OCI-LY7 (cell line): ENCODE measurements at regions of chr15 and their contacts with region 1.

Region 1: DNA sequence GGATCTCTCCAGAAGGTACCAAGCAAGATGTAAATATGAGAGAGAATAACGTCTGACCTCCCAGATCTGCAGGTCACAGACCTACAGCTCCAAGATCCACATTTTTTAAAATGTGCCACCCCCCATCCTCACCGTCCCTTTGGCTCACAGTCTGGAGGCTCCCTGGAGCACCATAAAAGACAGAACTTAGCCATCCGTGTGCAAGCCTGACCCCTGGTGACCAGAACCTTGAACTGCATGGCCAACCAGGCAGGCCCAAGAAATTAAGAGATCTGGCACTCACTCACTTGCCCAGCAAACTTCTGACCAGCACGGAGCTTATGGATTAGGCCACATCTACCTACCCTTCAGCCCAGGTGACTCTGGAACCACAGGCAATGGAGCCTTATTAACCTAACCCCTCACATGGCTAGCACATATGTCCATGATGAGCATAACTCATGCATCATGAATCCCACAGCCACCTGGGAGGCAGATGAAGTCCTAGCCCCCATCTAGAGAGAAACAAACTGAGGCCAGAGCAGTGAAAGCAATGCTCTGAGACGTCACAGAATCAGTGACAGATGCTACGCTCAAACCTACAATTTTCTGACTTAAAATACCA is 275.3 kb downstream of the UACA start:
- DNase-seq: peak; percentile 66
- H3K4me3 ChIP-seq: no peak overlapping the region
- H3K27ac ChIP-seq: no peak overlapping the region
- H3K4me1 ChIP-seq: peaks cover 33% of the 10 kb centered on the region
- CTCF ChIP-seq: peak; percentile 95

Region 2: DNA sequence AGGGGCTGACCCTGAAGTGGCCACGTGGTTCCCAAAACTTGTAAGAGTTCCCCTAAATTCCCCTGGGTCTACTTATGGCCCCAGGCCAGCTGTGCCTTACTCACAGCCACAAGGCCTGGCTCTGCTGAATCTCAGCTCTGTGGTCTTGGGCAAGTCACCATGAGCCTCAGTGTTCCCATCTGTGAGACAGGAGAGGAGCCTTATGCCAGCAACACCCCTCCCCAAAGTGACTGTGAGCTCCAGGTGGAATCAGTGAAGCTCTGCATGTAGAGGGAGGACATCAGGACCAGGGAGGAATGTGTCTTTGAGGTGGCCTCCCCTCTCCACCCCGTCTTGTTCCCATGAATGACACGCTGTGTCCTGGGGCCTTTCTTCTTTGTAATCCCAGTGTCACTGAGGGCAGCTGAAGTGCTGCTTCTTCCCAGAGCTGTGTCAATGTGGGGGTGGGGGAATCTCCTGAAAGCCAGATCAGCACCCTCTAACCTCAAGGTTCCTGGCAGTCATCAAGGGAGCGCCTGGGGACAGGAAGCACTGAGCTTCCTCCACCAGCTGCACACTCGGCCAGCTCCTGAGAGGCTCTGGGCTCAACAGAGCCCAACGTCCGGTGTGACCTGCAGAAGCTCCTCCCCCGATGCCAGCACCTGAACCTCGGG is 16.3 kb after region 1 on chr15:
- CTCF ChIA-PET with region 1: interaction called, 15 read pairs
- POLR2A ChIA-PET with region 1: interaction called, 36 read pairs
- intact Hi-C with region 1: loop called (anchors 1 kb)
- DNase-seq: peak; percentile 93
- H3K4me3 ChIP-seq: peak overlapping the region; percentile 42
- H3K27ac ChIP-seq: peak overlapping the region; percentile 86
- H3K4me1 ChIP-seq: peaks cover 61% of the 10 kb centered on the region
- CTCF ChIP-seq: no peak

Region 3: DNA sequence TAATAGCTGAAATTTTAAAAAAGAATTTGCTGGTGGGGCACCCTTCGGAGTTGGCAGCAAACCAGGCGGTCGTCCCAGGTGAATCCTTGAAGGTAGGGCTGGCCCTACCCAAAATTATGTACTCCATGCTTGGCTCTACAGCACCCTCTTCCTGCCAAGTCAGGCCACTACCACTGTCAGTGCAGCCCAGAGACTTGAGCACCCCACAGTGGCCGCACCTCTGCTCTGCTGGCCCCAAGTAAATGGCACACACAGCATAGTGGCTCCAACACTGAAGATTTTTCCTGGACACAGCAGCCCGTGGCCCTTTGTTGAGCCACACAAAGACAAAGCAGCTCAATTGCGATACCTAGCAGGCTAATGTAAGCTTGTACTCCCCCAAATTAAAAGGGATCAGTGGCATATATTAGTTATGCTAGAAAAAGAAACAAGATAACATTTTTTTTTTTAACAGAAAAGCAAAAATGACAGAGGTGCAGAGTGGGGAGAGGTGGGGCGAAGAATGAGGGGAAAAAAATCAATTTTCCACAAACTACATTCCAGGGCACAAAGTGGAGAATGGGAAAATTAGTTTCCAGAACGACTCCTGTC is 24.8 kb after region 1 on chr15:
- CTCF ChIA-PET with region 1: interaction called, 6 read pairs
- POLR2A ChIA-PET with region 1: no interaction called
- intact Hi-C with region 1: loop called (anchors 1 kb)
- DNase-seq: peak; percentile 84
- H3K4me3 ChIP-seq: no peak overlapping the region
- H3K27ac ChIP-seq: no peak overlapping the region
- H3K4me1 ChIP-seq: peaks cover 3% of the 10 kb centered on the region
- CTCF ChIP-seq: peak; percentile 100

Region 4: GRCh38 chr15:70976851-70977250 is 488.7 kb after region 1 on chr15:
- CTCF ChIA-PET with region 1: no interaction called
- POLR2A ChIA-PET with region 1: no interaction called
- intact Hi-C with region 1: no loop called
- DNase-seq: no peak
- H3K4me3 ChIP-seq: no peak overlapping the region
- H3K27ac ChIP-seq: no peak overlapping the region
- H3K4me1 ChIP-seq: no peaks in the 10 kb centered on the region
- CTCF ChIP-seq: no peak